Endothelial cell of umbilical vein (primary cell): ENCODE measurements at regions of chr17 and their contacts with region 1.

Region 1: DNA sequence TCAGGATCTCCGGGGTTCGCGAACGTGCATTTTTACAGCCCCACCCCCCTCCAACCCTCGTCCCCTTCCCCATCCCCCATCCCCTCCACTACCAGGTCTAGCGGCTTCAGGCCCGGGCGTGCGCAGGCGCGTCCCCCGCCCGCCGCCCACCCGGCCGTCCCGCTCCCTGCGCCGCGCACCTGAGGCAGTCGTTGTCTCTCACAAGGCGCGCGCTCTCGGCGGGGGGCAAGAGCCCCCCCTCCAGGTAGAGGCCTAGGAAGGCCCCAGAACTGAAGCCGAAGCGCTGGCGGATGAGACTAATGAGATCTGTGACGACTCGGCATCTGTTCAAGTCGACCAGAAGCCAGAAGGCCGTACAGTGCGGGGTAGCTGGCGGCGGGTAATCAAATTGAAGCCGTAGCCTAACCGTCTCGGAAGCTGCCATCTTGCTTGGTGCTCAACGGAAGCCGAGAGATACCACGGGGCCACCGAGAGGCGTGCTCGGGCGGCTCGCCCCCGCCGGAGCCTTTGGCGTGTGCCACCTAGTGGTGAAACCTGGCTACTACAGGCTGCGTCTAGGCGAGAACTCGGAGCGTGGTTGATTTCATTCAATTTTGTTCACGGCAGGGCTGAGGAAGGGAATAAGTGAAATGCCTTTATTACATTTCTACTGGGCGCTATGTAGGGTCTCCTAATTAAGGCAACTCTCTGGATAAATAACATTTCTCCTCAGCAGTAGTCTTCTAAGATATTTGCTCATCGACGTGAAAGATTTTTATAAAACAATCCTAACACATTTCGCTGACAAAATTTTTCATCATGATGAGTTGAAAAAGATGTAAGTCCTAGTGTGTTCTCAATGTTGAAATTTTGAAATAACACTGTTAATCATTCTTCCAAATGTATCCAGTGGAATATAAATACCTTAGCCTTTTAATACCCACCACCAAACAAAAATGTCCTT is at the start of gene COIL:
- DNase-seq: peak; percentile 90
- H3K4me3 ChIP-seq: peak within 1 kb of the TSS; percentile 73 to 98 (median 88)
- H3K27ac ChIP-seq: peak within 1 kb of the TSS; percentile 84
- H3K4me1 ChIP-seq: peaks cover 2% of the 10 kb centered on the region
- H3K27me3 ChIP-seq: no peaks in the 10 kb centered on the region
- CTCF ChIP-seq: peak; percentile 99
- POLR2A ChIP-seq: peak; percentile 49
- total RNA-seq, gene COIL: 17.6 and 20.6 TPM in 2 replicates

Region 2: GRCh38 chr17:56499799-56500388 is 461.0 kb before region 1 on chr17:
- CTCF ChIA-PET with region 1: interaction called, 4 read pairs
- POLR2A ChIA-PET with region 1: no interaction called
- dilution Hi-C with region 1: no loop called
- intact Hi-C with region 1: loop called (anchors 2 kb)
- DNase-seq: peak; percentile 47
- H3K4me3 ChIP-seq: no peak overlapping the region
- H3K27ac ChIP-seq: no peak overlapping the region
- H3K4me1 ChIP-seq: no peaks in the 10 kb centered on the region
- H3K27me3 ChIP-seq: peaks cover 2 to 9% of the 10 kb centered on the region in 2 experiments
- CTCF ChIP-seq: peak; percentile 25 to 33
- POLR2A ChIP-seq: no peak

Region 3: DNA sequence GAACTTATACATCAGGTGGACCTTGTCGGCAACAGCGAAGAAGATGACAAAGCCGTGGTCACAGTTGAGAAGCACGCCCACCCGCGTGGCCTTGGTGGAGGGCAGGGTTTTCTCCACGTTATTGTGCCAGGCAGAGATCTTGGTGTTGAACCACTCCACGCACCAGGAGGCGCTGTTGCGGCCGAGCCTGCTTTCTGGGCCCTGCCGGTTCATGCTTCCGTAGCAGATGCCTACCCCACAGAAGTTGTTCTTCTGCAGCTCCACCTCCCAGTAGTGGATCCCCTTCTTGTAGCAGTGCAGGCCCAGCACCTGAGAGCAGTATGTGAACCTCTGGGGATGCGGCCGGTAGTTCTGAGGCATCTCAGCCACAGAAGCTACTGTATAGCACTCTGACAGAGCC is 69.1 kb before region 1 on chr17:
- CTCF ChIA-PET with region 1: no interaction called
- POLR2A ChIA-PET with region 1: no interaction called
- dilution Hi-C with region 1: no loop called
- intact Hi-C with region 1: loop called (anchors 1 kb)
- DNase-seq: peak; percentile 28
- H3K4me3 ChIP-seq: no peak overlapping the region
- H3K27ac ChIP-seq: no peak overlapping the region
- H3K4me1 ChIP-seq: no peaks in the 10 kb centered on the region
- H3K27me3 ChIP-seq: no peaks in the 10 kb centered on the region
- CTCF ChIP-seq: peak; percentile 55 to 66
- POLR2A ChIP-seq: no peak

Region 4: DNA sequence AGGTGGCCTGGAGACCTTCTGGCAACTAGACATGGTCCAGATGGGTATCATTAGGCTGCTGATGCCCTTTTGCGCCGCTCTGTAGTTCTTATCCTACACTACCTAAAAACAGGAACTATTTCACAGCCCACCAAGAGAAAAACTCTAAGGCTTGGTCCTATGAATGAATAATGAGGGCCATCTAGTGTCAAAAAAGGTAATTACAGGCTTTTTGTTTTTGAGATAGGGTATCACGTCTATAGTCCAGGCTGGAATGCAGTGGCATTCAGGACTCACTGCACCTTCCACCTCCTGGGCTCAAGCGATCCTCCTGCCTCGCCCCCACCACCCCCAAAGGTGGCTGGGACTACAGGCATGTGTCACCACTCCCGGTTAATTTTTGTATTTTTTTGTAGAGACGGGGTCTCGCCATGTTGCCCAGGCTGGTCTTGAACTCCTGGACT is 20.9 kb before region 1 on chr17:
- CTCF ChIA-PET with region 1: no interaction called
- POLR2A ChIA-PET with region 1: no interaction called
- dilution Hi-C with region 1: no loop called
- intact Hi-C with region 1: loop called (anchors 1 kb)
- DNase-seq: peak; percentile 77
- H3K4me3 ChIP-seq: no peak overlapping the region
- H3K27ac ChIP-seq: peak overlapping the region; percentile 35
- H3K4me1 ChIP-seq: peaks cover 24% of the 10 kb centered on the region
- H3K27me3 ChIP-seq: no peaks in the 10 kb centered on the region
- CTCF ChIP-seq: peak; percentile 51 to 53
- POLR2A ChIP-seq: no peak

Region 5: DNA sequence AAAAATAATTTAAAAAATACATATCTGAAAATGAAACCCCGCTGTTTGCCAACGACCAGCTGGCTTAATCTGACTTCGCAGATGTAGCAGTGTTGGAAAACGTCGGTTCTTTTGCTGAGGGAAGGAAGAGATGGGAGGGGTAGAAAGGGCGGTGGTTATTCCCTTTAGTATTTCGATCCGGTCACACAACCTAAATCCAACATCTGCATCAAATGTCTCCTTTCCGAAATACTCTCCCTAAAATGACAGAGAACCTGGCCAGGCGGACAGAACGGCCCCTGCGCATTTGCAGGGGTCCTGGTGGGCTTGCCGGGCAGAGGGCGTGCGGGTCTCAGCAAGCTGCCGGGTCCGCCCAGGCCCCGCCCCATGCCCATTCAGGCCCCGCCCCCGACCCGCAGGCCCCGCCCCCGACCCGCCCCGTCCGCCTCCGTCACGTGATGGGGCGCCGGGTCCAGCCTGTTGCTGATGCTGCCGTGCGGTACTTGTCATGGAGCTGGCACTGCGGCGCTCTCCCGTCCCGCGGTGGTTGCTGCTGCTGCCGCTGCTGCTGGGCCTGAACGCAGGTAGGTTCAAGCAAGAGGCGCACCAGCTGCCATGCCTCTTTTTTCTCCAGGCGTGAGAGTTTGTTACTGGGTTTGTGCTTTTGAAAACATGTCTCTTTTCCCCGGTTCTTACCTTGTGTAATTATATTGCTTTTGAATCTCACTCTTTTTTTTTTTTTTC is 17.0 kb after region 1 on chr17 and contains the start of gene SCPEP1:
- CTCF ChIA-PET with region 1: interaction called, 13 read pairs
- POLR2A ChIA-PET with region 1: no interaction called
- dilution Hi-C with region 1: no loop called
- intact Hi-C with region 1: loop called (anchors 1 kb)
- DNase-seq: peak; percentile 85
- H3K4me3 ChIP-seq: peak within 1 kb of the TSS; percentile 64 to 85 (median 74)
- H3K27ac ChIP-seq: no peak within 1 kb of the TSS
- H3K4me1 ChIP-seq: peaks cover 14% of the 10 kb centered on the region
- H3K27me3 ChIP-seq: peaks cover 0 to 4% of the 10 kb centered on the region in 2 experiments
- CTCF ChIP-seq: no peak
- POLR2A ChIP-seq: no peak
- total RNA-seq, gene SCPEP1: 38.6 and 49.4 TPM in 2 replicates

Region 6: DNA sequence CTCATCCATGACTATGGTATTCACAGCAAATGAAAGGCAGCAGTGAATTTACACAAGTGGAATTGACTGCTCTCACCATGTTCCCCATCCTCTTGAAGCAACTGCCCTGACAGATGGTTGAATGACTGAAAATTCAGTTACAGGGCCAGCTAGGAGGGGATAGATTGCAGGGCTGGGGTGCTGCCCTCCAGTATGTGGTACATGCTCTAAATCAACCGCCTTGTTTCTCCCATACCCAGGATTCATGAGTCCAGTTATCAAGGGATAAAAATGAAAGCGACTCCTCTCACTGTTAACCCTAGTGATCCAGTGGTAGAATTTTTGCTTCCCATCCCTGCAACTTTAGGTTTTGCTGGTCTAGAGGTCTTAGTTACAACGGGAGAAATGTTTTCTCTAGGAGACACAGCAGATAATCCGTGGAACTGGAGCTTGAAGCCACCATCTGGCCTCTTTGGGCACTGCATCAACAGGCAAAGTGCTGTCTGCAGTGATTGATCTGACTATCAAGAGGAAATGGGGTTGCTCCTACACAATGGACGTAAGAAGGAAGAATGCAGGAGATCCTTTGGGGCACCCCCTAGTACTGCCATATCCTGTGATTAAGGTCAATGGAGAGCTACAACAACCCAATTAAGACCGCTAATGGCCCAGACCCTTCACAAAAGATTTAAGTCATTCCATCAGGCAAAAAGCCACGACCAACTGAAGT is 49.0 kb after region 1 on chr17:
- CTCF ChIA-PET with region 1: interaction called, 4 read pairs
- POLR2A ChIA-PET with region 1: no interaction called
- dilution Hi-C with region 1: no loop called
- intact Hi-C with region 1: loop called (anchors 2 kb)
- DNase-seq: peak; percentile 73
- H3K4me3 ChIP-seq: no peak overlapping the region
- H3K27ac ChIP-seq: no peak overlapping the region
- H3K4me1 ChIP-seq: peaks cover 4% of the 10 kb centered on the region
- H3K27me3 ChIP-seq: peaks cover 3 to 6% of the 10 kb centered on the region in 2 experiments
- CTCF ChIP-seq: peak; percentile 66 to 73
- POLR2A ChIP-seq: no peak